SK-N-SH (cell line): ENCODE measurements at regions of chr12 and their contacts with region 1.

Region 1: GRCh38 chr12:67637718-67638117 is 10.8 kb upstream of the DYRK2 start:
- DNase-seq: no peak
- H3K4me3 ChIP-seq: no peak overlapping the region
- H3K27ac ChIP-seq: no peak overlapping the region
- H3K4me1 ChIP-seq: no peaks in the 10 kb centered on the region
- H3K27me3 ChIP-seq: no peaks in the 10 kb centered on the region
- CTCF ChIP-seq: no peak
- EP300 ChIP-seq: no peak
- RAD21 ChIP-seq: no peak

Region 2: DNA sequence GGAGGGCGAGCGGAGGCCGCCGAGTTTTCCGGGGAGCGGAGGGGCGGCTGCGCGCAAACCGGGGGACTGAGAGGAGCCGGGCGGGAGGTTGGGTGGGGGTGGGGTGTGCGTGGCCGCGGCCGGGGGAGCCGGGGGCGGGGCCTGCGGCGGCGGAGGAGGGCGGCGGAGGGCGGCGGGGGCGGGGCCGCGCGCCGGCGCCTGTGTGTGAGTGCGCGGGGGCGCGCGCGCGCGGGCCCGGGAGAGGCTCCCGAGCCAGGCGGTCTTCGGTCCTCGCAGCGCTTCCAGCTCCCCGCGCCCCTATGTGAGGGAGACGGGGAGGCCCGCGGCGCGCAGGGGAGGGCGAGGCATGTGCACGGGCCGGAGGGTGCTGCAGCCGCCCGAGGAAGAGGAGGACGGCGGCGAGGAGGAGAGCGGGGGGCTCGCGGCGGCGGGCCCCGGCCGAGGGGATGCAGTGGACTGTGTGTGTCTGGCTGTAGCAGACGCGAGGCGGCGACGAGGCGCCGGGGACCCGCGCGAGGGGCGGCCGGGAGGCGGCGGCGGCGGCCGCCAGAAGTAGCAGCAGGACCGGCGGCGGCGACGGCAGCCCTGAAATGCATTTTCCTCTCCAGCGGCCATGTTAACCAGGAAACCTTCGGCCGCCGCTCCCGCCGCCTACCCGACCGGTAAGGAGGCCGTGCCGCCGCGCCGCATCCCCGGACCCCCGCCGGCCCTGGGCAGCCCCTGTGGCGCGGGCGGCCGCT is 11.0 kb after region 1 on chr12 and contains the start of gene DYRK2:
- CTCF ChIA-PET with region 1: interaction called, 12 read pairs
- POLR2A ChIA-PET with region 1: no interaction called
- DNase-seq: peak; percentile 94
- H3K4me3 ChIP-seq: peak within 1 kb of the TSS; percentile 92 to 96
- H3K27ac ChIP-seq: peak within 1 kb of the TSS; percentile 93 to 98
- H3K4me1 ChIP-seq: peaks cover 20 to 24% of the 10 kb centered on the region in 2 experiments
- H3K27me3 ChIP-seq: no peaks in the 10 kb centered on the region
- CTCF ChIP-seq: no peak
- EP300 ChIP-seq: no peak
- RAD21 ChIP-seq: no peak
- polyA plus RNA-seq, gene DYRK2: 48.8 and 54.2 TPM in 2 replicates